B cell (primary cell): ENCODE measurements at regions of chr20 and their contacts with region 1.

Region 1: GRCh38 chr20:64079273-64080012 is at the start of gene RGS19:
- DNase-seq: peak; percentile 95
- ATAC-seq: peak; percentile 46
- H3K4me3 ChIP-seq: peak within 1 kb of the TSS; percentile 80 to 98 (median 96)
- H3K4me3 Mint-ChIP-seq: peak within 1 kb of the TSS; percentile 87
- H3K27ac ChIP-seq: peak within 1 kb of the TSS; percentile 77 to 94
- H3K27ac Mint-ChIP-seq: peak within 1 kb of the TSS; percentile 93
- H3K4me1 ChIP-seq: peaks cover 46 to 75% of the 10 kb centered on the region in 2 donors
- H3K4me1 Mint-ChIP-seq: peaks cover 57% of the 10 kb centered on the region
- H3K27me3 ChIP-seq: peaks cover 0 to 3% (median under 1%) of the 10 kb centered on the region in 4 experiments
- H3K27me3 Mint-ChIP-seq: no peaks in the 10 kb centered on the region
- CTCF ChIP-seq: no peak
- total RNA-seq, gene RGS19: 69.4 TPM in 2 replicates

Region 2: DNA sequence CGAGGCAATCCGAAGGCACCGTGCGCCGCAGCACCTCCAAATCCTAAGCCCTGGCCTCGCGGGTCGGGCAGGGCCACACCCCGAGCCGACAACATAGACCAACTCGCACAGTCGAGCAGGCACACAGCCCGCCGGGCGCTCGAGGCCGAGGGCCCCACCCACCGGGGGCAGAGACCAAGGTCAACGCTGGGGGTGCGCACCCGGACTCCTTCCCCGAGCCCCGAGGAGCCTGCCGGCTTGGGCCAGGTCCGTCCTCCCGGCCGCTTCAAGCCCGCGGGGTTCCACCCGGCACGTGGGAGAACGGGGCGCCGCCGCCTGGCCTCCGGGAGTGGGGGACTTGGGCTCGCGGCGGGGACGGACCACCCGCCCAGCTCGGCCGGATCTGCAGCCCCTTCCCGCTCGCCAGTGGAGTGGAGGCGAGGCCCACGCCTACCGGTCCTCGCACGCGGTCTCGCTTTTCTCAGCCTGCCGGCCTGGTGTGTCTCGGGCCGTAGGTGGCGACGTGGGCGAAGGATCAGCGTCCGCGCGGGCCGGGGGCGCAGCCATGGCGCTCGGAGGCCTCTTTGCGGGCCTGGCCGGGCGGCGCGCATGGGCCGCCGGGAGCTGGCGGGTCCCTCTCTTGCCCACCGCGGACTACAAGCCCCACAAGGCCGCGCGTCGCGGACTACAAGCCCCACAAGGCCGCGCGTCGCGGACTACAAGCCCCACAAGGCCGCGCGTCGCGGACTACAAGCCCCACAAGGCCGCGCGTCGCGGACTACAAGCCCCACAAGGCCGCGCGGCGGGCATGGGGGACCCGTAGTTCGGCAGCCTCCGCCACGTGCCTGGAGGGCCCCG is 123.4 kb before region 1 on chr20 and contains the start of gene UCKL1:
- CTCF ChIA-PET with region 1: no interaction called
- POLR2A ChIA-PET with region 1: no interaction called
- intact Hi-C with region 1: loop called (anchors 5 kb)
- DNase-seq: peak; percentile 91
- ATAC-seq: peak; percentile 76
- H3K4me3 ChIP-seq: peak within 1 kb of the TSS; percentile 36 to 91 (median 84)
- H3K4me3 Mint-ChIP-seq: peak within 1 kb of the TSS; percentile 90
- H3K27ac ChIP-seq: peak within 1 kb of the TSS; percentile 57 to 85
- H3K27ac Mint-ChIP-seq: peak within 1 kb of the TSS; percentile 90
- H3K4me1 ChIP-seq: peaks cover 39 to 49% of the 10 kb centered on the region in 2 donors
- H3K4me1 Mint-ChIP-seq: peaks cover 37% of the 10 kb centered on the region
- H3K27me3 ChIP-seq: no peaks in the 10 kb centered on the region
- H3K27me3 Mint-ChIP-seq: no peaks in the 10 kb centered on the region
- CTCF ChIP-seq: no peak
- total RNA-seq, gene UCKL1: 104 and 106 TPM in 2 replicates

Region 3: DNA sequence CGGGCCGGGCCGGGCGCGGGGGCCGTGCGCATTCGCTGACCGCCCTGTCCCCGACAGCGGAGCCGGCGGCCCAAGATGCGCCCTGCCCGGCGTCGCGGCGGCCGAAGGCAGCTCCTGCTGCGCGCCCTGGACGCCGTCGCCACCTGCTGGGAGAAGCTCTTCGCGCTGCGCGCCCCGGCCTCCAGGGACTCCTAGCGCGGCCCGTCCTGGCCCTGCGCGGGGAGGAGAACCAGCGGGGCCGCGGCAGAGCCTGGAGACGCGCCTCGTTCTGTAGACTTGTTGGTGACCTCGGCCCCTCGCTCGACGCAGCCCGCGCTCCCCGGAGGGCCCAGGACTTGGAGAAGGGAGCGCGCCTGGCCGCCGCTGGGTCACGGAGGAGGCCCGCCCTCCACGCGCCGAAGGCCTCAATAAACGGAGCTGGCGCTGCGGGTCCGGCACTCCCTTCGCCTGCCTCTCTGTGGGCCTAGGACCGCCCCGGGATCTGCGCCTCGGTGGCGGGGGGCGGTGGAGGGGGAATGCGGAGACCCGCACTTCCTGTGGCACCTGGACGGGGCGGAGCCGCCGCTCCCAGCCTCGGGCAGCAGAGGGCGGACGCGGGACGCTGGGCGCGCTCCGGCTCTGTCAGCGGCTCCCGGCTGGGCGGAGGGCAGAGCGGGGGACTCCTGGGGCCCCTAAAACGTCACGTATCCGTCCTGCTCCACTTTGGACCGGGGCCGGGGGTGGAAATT is 40.7 kb before region 1 on chr20:
- CTCF ChIA-PET with region 1: interaction called, 65 read pairs
- POLR2A ChIA-PET with region 1: interaction called, 7 read pairs
- intact Hi-C with region 1: loop called (anchors 2 kb)
- DNase-seq: peak; percentile 84
- ATAC-seq: peak; percentile 86
- H3K4me3 ChIP-seq: peak overlapping the region in 4 of 5 experiments; percentile 64 to 85 (median 66)
- H3K4me3 Mint-ChIP-seq: peak overlapping the region; percentile 80
- H3K27ac ChIP-seq: peak overlapping the region in 1 of 2 donors; percentile 28
- H3K27ac Mint-ChIP-seq: peak overlapping the region; percentile 20
- H3K4me1 ChIP-seq: peaks cover 31 to 32% of the 10 kb centered on the region in 2 donors
- H3K4me1 Mint-ChIP-seq: peaks cover 23% of the 10 kb centered on the region
- H3K27me3 ChIP-seq: peaks cover 0 to 23% (median 11%) of the 10 kb centered on the region in 4 experiments
- H3K27me3 Mint-ChIP-seq: peaks cover 11% of the 10 kb centered on the region
- CTCF ChIP-seq: peak; percentile 79

Region 4: DNA sequence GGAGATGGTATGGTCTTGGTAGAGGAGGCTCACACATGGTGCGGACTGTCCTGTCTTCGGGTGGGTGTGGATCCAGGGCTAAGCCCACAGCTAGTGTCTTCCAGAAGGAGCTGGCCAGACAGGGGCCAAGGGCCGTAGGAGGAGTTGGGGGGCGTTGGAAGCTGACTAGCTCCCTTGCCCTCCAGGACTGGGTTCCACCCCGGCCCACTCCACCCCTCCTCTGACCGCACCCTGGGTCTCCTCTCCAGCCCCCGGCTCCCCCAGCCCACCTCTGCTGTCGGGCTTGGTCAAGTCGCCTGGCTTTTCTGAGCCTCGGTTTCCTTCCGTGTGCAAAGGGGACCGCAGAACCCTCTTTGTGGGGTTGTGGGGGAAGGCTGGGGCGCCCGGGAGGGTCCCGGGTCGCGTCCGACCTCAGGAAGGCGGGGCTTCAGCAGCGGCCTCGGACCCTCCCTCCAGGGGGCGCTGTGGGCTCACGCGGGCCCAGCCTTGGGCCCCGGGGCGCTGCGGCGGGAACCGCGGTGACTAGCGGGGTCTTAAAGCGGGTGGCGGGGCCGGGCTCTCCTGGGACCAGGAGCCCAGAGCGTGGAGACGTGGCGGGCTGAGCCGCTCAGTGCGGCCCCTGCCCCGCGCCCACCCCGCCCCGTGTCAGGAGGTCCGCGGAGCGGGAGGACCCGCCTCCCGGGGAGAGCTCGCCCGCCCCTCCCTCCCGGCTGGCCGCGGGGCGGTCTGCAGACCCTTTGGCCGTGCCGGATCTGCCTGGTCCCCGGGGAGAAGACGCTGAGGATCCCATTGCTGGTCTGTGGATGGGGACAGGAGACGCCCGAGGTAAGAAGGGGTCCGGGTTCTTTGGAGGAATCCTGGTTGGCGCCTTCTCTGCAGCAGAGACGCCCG is 22.5 kb after region 1 on chr20:
- CTCF ChIA-PET with region 1: interaction called, 76 read pairs
- POLR2A ChIA-PET with region 1: interaction called, 24 read pairs
- intact Hi-C with region 1: loop called (anchors 1 kb)
- DNase-seq: peak; percentile 84
- ATAC-seq: peak; percentile 32
- H3K4me3 ChIP-seq: peak overlapping the region in 4 of 5 experiments; percentile 24 to 59 (median 55)
- H3K4me3 Mint-ChIP-seq: peak overlapping the region; percentile 92
- H3K27ac ChIP-seq: peak overlapping the region in 1 of 2 donors; percentile 89
- H3K27ac Mint-ChIP-seq: peak overlapping the region; percentile 95
- H3K4me1 ChIP-seq: peaks cover 27 to 43% of the 10 kb centered on the region in 2 donors
- H3K4me1 Mint-ChIP-seq: peaks cover 38% of the 10 kb centered on the region
- H3K27me3 ChIP-seq: peaks cover 0 to 21% (median 5%) of the 10 kb centered on the region in 4 experiments
- H3K27me3 Mint-ChIP-seq: no peaks in the 10 kb centered on the region
- CTCF ChIP-seq: peak; percentile 84

Region 5: DNA sequence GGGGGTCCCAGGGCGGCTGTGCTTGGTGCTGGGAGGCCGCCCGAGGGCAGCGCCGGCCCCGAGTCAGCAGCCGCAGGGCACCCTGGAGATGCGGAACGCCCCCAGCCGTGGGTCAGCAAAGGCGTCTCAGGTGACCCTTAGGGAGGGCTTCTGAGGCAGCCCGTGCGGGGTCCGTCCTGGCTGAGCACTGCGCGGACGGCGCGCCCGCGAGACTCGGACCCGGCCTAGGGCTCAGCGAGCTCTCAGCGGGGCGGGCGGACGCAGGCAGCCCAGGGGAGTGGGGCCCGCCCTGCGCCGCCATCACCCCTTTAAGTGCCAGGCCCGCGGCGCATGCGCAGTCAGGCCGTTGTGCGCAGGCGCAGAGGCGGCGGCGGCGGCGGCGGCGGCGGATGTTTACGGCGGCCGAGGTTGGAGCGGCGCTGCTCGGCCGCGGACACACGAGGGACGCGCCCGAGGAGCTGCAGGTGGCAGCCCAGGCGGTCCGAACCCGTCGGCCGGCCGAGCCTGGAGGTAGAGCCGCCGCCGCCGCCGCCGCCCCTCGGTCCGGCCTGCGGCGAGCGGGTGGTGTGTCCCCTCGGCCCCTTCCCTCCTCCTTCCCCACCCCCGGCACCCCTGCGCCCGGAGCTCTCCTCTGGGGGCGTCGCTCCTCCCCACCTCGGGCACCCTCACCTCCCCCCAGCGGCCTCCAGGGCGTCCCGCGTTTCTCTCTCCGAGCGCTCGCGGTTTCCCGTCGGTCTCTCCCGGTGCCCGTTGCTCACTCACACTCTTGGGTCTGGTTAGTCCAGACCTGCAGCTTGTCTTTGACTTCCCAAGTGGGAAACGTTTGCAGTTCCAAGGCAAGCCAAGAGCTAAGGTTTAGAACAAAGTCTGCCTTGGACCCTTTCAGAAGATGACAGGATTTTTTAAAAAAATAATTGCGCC is 176.2 kb after region 1 on chr20 and contains the start of gene PCMTD2:
- CTCF ChIA-PET with region 1: interaction called, 3 read pairs
- POLR2A ChIA-PET with region 1: no interaction called
- intact Hi-C with region 1: loop called (anchors 5 kb)
- DNase-seq: peak; percentile 94
- ATAC-seq: peak; percentile 79
- H3K4me3 ChIP-seq: peak within 1 kb of the TSS; percentile 57 to 86 (median 64)
- H3K4me3 Mint-ChIP-seq: peak within 1 kb of the TSS; percentile 95
- H3K27ac ChIP-seq: peak within 1 kb of the TSS; percentile 43 to 77
- H3K27ac Mint-ChIP-seq: peak within 1 kb of the TSS; percentile 98
- H3K4me1 ChIP-seq: peaks cover 25 to 30% of the 10 kb centered on the region in 2 donors
- H3K4me1 Mint-ChIP-seq: peaks cover 52% of the 10 kb centered on the region
- H3K27me3 ChIP-seq: peaks cover 0 to 4% (median 2%) of the 10 kb centered on the region in 4 experiments
- H3K27me3 Mint-ChIP-seq: peaks cover 8% of the 10 kb centered on the region
- CTCF ChIP-seq: peak; percentile 22
- total RNA-seq, gene PCMTD2: 120 and 131 TPM in 2 replicates